BJ (cell line): ENCODE measurements at regions of chr6 and their contacts with region 1.

Region 1: DNA sequence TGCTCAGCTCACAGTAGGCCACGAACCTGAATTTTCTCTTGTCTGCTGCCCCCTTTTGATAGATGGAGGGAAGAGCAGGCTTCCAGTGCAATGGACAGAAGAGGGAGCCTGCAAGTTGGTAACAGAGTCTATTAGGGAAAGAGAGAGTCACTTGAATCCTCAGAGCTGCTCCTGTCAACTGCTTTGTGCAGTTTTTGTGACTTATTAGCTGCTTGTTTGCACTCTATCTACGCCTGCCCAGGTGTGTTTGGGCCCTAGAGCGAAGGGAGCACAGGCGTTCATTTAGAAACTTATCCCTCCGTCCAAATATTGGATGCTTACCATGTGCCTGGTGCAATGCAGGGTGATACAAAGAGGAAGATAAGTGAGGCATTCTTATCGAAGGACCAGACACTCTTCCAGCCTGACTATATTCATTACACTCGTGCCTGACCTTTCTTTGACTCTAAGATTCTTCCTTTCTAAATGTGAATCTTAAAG is 11.6 kb upstream of the SLC2A12 start:
- DNase-seq: no peak
- H3K4me3 ChIP-seq: no peak overlapping the region
- H3K27me3 ChIP-seq: no peaks in the 10 kb centered on the region
- CTCF ChIP-seq: peak; percentile 94

Region 2: DNA sequence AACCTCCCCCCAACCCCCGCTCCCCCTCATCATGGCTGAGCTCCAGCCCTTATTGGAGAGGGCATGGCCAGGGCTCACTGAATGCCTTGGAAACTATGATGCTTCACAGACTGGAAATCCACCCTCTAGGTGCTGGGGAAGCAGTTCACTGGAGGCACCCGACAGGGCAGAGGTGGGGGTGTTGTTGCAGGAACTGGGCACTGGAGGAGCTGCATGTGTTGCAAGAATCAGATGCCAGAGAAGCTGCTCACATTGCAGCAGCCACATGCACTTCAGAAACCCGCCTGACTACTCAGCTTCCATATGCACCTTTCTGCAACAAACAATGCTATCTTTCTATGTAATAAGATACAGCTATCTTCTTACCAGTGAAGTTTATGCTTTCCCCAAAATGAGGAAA is 118.8 kb before region 1 on chr6:
- CTCF ChIA-PET with region 1: interaction called, 14 read pairs
- POLR2A ChIA-PET with region 1: no interaction called
- DNase-seq: no peak
- H3K4me3 ChIP-seq: no peak overlapping the region
- H3K27me3 ChIP-seq: peaks cover 1% of the 10 kb centered on the region
- CTCF ChIP-seq: no peak

Region 3: DNA sequence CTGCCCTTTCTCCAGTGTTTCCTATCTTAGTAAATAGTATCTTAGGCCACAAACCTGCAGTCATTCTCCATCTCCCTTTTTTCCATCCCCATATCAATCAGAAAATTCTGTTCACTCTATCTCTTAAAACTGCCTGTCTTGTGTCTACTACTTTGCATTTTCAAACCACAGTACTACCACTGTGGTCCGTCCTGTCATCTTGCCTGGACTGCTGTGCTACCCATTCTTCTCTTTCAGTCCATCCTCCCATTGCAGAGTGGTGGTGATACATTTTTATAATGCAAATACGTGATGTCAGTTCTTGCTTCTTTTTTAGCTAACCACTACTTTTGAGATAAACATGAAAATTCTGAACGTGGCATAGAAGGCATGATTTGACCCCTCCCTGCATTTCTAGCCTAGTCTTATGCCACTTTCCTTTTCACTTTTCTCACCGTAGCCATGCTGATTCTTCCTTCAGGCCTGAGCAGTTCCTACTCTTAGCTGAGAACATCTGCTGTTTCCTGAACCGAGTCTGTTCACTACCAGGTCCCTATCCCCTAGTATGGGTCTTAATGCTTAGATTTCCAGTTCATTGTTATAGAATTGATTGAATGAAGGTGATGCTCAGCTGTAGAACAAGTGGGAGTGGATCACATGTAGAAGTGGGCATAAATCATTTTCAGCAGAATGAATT is 97.2 kb before region 1 on chr6:
- CTCF ChIA-PET with region 1: interaction called, 16 read pairs
- POLR2A ChIA-PET with region 1: no interaction called
- DNase-seq: no peak
- H3K4me3 ChIP-seq: no peak overlapping the region
- H3K27me3 ChIP-seq: no peaks in the 10 kb centered on the region
- CTCF ChIP-seq: no peak

Region 4: DNA sequence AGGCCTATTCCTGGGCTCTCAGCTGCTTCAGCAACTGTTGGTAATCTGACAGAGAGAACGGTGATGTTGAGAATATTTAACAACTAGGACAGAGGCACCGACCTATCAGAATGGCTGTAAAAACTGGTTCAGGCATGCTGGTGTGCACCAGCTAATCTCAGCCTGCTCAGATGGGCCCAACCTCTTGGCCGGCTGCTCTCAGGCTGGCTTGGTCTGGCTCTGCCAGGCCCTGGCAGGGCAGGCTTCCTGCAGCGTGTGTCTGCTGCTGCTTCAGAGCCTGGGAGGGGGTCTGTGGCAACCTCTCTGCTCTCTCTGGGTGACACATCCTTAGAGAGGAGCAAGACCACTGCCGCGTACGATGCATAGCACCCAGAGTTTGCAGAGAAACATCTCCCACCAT is 16.3 kb before region 1 on chr6:
- CTCF ChIA-PET with region 1: interaction called, 12 read pairs
- POLR2A ChIA-PET with region 1: no interaction called
- DNase-seq: no peak
- H3K4me3 ChIP-seq: no peak overlapping the region
- H3K27me3 ChIP-seq: no peaks in the 10 kb centered on the region
- CTCF ChIP-seq: no peak

Region 5: DNA sequence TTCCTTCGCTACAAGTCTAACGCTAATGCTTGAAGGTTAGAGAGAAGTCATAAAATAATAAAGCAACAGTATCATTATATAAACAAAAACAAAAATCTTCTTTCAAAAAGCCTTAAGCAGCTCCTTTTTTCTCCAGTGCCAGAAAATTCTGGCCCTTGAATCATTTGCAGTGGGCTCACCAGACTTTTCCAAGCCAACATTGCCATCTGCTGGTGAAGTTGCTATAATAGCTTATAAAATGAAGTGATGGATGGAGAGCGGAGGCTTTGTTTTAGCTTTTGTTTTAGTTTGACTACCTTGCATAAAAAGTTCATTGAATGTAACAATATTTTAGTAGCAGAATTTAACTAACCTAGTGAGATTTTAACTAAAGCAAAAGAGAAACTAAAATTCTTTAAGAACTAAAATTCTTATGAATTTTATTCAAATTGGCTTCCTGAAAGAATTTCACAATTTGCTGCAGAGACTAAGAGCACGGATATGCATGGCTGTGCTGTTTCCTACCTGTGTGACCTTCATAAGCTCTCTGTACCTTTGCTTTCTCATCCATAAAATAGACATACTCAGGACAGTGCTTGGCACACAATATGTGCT is 33.2 kb after region 1 on chr6:
- CTCF ChIA-PET with region 1: interaction called, 34 read pairs
- POLR2A ChIA-PET with region 1: no interaction called
- DNase-seq: no peak
- H3K4me3 ChIP-seq: no peak overlapping the region
- H3K27me3 ChIP-seq: peaks cover 6% of the 10 kb centered on the region
- CTCF ChIP-seq: peak; percentile 54

Region 6: DNA sequence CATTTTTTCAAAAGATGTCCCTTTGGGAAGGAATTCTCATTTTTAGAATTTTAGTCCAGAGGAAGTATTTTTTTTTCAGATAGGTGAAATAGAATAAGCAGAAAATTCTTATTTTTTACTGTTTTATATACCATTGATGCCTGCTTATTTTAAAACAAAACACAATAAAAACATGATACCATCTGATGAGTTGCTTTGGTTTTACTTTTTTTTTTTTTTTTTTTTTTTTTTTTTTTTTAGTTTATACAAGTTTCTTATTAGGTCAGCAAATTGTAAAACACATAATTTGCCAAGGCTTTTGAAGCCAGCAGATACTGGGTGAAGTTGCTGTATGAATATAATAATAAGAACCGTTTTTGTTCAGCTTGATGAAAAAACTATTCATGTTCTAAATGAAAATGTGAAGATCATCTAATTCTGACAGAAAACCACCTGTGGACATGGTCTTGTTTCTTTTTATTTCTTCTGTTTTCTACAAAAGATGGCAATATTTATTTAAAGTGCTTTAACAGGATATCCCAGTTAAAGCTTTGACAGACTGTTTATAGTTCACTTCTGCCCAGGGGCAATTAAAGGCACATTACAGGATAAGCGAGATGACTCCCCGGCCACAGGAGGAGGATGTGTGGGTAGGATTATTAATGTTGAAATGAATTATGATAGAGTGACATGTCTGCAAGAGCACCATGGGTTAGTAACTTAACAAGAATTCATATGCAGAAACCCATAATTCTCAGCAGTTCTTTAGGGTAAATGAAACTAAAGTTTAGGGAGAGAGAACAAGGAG is 1148.2 kb after region 1 on chr6:
- CTCF ChIA-PET with region 1: no interaction called
- POLR2A ChIA-PET with region 1: no interaction called
- DNase-seq: peak; percentile 39
- H3K4me3 ChIP-seq: no peak overlapping the region
- H3K27me3 ChIP-seq: no peaks in the 10 kb centered on the region
- CTCF ChIP-seq: no peak